HCT116 (cell line): ENCODE measurements at regions of chr18 and their contacts with region 1.

Region 1: DNA sequence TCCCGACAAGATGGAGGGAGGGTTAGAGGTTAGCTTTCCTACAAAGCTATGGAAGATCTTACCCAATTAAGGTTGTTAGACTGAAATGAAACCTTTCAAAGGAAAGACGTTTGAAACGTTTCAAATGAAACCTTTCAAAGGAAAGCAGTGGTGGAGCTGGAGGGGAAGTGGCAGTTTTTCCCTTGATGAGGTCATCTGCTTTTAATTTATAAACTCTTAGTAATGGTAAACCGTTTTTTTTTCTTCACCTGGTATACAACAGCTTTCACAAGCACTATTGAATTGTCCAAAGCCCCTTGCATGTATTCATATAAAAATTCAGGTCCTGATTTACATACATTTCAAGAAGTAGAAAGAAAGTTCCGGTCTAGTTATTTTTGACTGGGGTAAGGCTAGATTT is 7.4 kb downstream of the PMAIP1 start:
- DNase-seq: no peak
- ATAC-seq: no peak
- H3K4me3 ChIP-seq: no peak overlapping the region
- H3K27ac ChIP-seq: no peak overlapping the region
- H3K4me1 ChIP-seq: peaks cover 36 to 87% of the 10 kb centered on the region in 2 experiments
- H3K27me3 ChIP-seq: no peaks in the 10 kb centered on the region
- CTCF ChIP-seq: no peak
- POLR2A ChIP-seq: no peak
- RAD21 ChIP-seq: no peak

Region 2: DNA sequence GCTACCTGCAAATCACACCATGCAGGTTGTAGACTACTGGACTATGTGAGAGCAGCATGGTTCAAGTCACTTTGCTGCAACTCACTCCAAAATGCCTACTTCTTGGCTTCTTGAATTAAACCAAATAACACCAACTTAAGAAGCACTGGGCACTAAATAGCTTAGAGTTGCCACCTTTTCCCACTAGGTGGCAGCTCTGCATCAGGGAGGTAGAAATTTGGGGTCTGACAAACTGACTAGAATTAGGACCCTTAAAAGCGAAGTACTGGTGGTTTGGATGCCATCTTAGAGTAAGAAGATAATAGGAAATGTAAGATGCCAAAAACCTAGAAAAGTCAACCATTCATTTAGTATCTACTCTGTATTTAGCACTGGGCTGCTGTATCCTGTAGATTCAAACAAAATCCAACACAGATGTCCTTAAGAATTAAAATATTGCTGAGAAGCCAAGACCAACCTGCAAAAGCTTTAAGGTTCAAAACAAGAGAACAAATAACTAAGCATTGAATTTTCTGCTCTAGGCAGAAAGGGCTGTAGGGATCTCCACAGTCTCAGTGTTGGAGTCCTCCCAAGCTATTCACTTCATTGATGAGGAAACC is 275.5 kb before region 1 on chr18:
- CTCF ChIA-PET with region 1: no interaction called
- POLR2A ChIA-PET with region 1: no interaction called
- RAD21 ChIA-PET with region 1: no interaction called
- intact Hi-C with region 1: no loop called
- DNase-seq: peak; percentile 24
- ATAC-seq: peak; percentile 69
- H3K4me3 ChIP-seq: no peak overlapping the region
- H3K27ac ChIP-seq: no peak overlapping the region
- H3K4me1 ChIP-seq: no peaks in the 10 kb centered on the region
- H3K27me3 ChIP-seq: peaks cover 30% of the 10 kb centered on the region; the same call in 1 of the 2 replicates
- CTCF ChIP-seq: peak; percentile 53 to 86 (median 72); a peak in 5 of 6 replicates
- POLR2A ChIP-seq: no peak
- RAD21 ChIP-seq: peak; percentile 74

Region 3: GRCh38 chr18:59918320-59918755 is 11.2 kb after region 1 on chr18:
- CTCF ChIA-PET with region 1: no interaction called
- POLR2A ChIA-PET with region 1: interaction called, 14 read pairs
- RAD21 ChIA-PET with region 1: no interaction called
- intact Hi-C with region 1: no loop called
- DNase-seq: peak; percentile 66
- ATAC-seq: peak; percentile 71
- H3K4me3 ChIP-seq: peak overlapping the region in 1 of 2 experiments; percentile 36; a peak in 2 of 4 replicates
- H3K27ac ChIP-seq: peak overlapping the region; percentile 90
- H3K4me1 ChIP-seq: peaks cover 50 to 84% of the 10 kb centered on the region in 2 experiments
- H3K27me3 ChIP-seq: no peaks in the 10 kb centered on the region
- CTCF ChIP-seq: no peak
- POLR2A ChIP-seq: no peak
- RAD21 ChIP-seq: no peak

Region 4: GRCh38 chr18:59957971-59958595 is 50.9 kb after region 1 on chr18:
- CTCF ChIA-PET with region 1: interaction called, 3 read pairs
- POLR2A ChIA-PET with region 1: interaction called, 19 read pairs
- RAD21 ChIA-PET with region 1: no interaction called
- intact Hi-C with region 1: no loop called
- DNase-seq: peak; percentile 67
- ATAC-seq: peak; percentile 45
- H3K4me3 ChIP-seq: peak overlapping the region in 1 of 2 experiments; percentile 4; a peak in 2 of 4 replicates
- H3K27ac ChIP-seq: peak overlapping the region; percentile 54
- H3K4me1 ChIP-seq: peaks cover 75 to 89% of the 10 kb centered on the region in 2 experiments
- H3K27me3 ChIP-seq: no peaks in the 10 kb centered on the region
- CTCF ChIP-seq: no peak
- POLR2A ChIP-seq: no peak
- RAD21 ChIP-seq: no peak